Left ventricle myocardium superior (tissue), 1 donor: ENCODE measurements at regions of chr4 and their contacts with region 1.

Region 1: GRCh38 chr4:24980064-24980690 is 50.6 kb downstream of the LGI2 start:
- DNase-seq: no peak
- ATAC-seq: peak; percentile 72

Region 2: GRCh38 chr4:23945451-23946017 is 1034.6 kb before region 1 on chr4:
- intact Hi-C with region 1: no loop called
- DNase-seq: peak; percentile 36
- ATAC-seq: peak; percentile 64

Region 3: GRCh38 chr4:24584175-24584850 is 395.9 kb before region 1 on chr4 and contains the start of gene DHX15:
- intact Hi-C with region 1: loop called (anchors 10 kb)
- DNase-seq: peak; percentile 98
- ATAC-seq: peak; percentile 96
- total RNA-seq, gene DHX15: 53.0 TPM

Region 4: DNA sequence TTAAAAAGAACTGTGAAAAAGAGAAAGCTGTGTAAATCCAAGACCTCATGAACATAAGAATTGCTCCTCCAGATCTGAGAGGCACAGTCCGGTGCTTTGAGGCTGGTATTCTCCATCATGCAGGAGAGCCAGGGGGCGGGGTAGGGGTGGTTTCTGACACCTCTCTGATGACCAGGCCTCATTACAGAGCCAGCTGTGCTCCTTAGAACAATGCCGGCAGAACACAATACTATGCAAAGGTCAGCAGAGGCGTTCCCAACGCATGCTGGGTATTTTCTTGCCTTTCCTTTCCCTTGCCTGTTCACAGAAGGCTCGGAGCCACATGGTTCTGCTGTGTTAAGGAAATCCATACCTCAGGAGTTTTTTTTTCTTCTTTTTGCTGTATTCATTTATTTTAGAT is 276.0 kb before region 1 on chr4:
- intact Hi-C with region 1: no loop called
- DNase-seq: no peak
- ATAC-seq: no peak

Region 5: GRCh38 chr4:25144870-25145481 is 164.8 kb after region 1 on chr4:
- intact Hi-C with region 1: loop called (anchors 2 kb)
- DNase-seq: no peak
- ATAC-seq: no peak